Posterior cingulate gyrus (tissue), 11 donors: ENCODE measurements at regions of chr1 and their contacts with region 1.

Region 1: GRCh38 chr1:71796006-71796405 is 486.3 kb downstream of the NEGR1 start:
- DNase-seq: no peak

Region 2: DNA sequence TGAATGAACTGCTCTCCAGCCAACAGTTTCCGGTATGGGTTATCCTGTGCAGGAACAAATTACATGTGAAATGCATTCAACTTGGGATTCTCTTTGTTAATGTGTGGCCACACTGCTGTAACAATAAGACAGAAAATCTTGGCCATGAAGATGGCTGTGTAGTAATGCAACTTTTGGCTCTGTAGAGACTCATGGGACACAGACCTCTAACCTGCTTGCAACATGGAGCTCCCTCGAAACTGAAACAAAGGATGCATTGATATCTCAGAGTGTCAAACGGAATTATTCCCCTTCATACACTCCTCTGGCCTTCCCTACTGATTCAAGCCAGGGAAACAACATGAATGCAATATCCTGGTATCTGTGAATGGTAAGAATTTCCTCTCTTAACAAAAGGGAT is 155.9 kb before region 1 on chr1:
- intact Hi-C with region 1: loop called (anchors 10 kb)
- DNase-seq: no peak